A549 (cell line): ENCODE measurements at regions of chr16 and their contacts with region 1.

Region 1: DNA sequence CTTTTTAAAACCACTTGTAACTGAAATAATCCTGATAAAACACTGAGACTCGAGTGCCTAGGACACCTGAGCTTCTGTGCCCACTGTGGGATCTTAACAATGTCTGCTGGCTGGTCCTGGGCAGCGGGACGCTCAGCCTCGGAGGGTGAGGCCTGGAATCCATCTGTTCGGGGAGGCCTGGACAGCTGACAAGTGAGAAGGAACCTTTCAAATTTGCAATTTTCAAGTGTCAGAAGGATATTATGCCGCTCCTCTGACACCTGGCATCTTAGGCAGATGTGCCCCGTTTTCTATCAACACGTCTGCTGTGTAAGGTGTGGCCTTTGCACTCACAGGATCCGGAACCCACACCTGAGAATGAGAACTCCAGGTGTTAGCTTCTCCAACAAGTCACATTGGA is 33.1 kb upstream of the C16orf78 start:
- DNase-seq: no peak
- ATAC-seq: no peak
- H3K4me3 ChIP-seq: no peak overlapping the region
- H3K27ac ChIP-seq: no peak overlapping the region
- H3K4me1 ChIP-seq: no peaks in the 10 kb centered on the region
- CTCF ChIP-seq: no peak
- EP300 ChIP-seq: no peak
- POLR2A ChIP-seq: no peak
- RAD21 ChIP-seq: no peak

Region 2: DNA sequence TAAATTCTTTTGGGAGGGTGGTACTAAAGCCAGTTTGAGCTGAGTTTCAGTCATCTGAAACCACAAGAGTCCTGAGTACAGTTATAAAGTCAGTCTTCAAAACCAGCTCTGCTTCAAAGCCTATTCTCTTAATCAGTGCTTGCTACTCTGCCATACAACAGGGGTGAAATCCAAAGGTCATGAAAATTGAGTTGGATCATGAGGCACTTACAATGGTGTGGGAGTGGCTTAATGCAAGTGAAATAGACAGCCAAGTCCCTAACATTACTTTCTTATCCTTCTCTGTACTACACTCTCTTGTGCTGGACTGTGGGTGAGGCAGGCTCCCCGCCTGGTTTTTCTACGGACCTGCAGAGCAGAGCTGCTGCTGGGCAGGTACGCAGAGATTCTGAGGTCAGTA is 71.3 kb before region 1 on chr16:
- CTCF ChIA-PET with region 1: no interaction called
- POLR2A ChIA-PET with region 1: no interaction called
- DNase-seq: no peak
- ATAC-seq: no peak
- H3K4me3 ChIP-seq: no peak overlapping the region
- H3K27ac ChIP-seq: no peak overlapping the region
- H3K4me1 ChIP-seq: no peaks in the 10 kb centered on the region
- CTCF ChIP-seq: no peak
- EP300 ChIP-seq: no peak
- POLR2A ChIP-seq: no peak
- RAD21 ChIP-seq: no peak

Region 3: DNA sequence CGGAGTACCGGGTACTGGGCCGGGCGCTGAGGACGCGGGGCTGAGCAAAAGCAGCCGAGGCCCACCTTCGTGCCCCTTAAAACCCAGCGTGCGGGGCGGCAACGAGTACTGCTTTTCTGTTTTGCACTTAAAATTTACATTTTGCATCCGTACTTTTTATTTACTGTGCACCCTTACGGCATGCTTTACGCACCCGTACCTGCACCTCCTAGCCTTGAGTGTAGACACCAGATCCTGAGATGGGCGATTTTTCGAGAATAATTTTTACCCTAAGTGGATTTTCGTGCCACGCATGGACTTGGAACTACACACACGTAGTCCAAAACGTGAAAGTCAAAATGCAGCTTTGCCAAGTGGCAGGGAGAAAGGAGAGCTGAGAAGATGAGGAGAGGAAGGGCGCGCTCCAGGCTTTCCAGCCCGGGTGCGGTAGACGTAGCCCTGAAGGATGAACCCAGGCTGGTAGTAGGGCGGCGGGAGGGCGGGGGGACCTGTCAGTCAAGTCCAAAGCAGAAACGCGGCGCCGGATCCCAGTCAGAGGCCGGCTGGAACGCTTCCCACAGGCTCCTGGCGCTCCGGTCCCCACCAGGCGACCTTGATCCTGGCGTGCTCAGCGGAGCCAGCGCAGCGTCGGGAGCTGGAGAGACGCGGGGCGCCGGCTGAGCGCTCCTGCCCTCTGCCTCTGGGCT is 57.6 kb before region 1 on chr16:
- CTCF ChIA-PET with region 1: no interaction called
- POLR2A ChIA-PET with region 1: no interaction called
- DNase-seq: no peak
- ATAC-seq: no peak
- H3K4me3 ChIP-seq: peak overlapping the region; percentile 57
- H3K27ac ChIP-seq: peak overlapping the region in 1 of 2 experiments; percentile 69; a peak in 1 of 6 replicates
- H3K4me1 ChIP-seq: 0 out of 3 replicates have a peak, but pooled peaks cover 3% of the 10 kb centered on the region
- CTCF ChIP-seq: no peak
- EP300 ChIP-seq: no peak
- POLR2A ChIP-seq: no peak
- RAD21 ChIP-seq: no peak

Region 4: DNA sequence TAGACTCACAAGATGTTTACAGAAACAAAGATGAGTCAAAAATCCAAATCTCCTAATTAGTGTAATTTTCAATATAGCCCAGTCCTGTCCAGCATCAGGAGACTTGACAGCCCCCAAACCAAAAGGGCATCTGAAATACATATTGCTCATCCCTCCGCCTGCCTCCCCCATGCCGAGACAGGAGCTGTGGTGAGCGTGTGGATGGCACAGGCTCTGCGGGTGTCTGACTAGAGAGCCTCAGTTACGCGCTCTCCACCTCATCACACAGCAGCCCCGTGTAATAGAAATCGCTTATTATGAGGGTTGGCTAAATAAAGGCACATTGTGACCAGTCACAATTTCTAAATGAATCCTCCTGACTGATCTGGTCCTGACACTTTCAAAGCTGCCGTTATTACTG is 15.8 kb before region 1 on chr16:
- CTCF ChIA-PET with region 1: no interaction called
- POLR2A ChIA-PET with region 1: no interaction called
- DNase-seq: no peak
- ATAC-seq: no peak
- H3K4me3 ChIP-seq: no peak overlapping the region
- H3K27ac ChIP-seq: no peak overlapping the region
- H3K4me1 ChIP-seq: no peaks in the 10 kb centered on the region
- CTCF ChIP-seq: no peak
- EP300 ChIP-seq: no peak
- POLR2A ChIP-seq: no peak
- RAD21 ChIP-seq: no peak

Region 5: DNA sequence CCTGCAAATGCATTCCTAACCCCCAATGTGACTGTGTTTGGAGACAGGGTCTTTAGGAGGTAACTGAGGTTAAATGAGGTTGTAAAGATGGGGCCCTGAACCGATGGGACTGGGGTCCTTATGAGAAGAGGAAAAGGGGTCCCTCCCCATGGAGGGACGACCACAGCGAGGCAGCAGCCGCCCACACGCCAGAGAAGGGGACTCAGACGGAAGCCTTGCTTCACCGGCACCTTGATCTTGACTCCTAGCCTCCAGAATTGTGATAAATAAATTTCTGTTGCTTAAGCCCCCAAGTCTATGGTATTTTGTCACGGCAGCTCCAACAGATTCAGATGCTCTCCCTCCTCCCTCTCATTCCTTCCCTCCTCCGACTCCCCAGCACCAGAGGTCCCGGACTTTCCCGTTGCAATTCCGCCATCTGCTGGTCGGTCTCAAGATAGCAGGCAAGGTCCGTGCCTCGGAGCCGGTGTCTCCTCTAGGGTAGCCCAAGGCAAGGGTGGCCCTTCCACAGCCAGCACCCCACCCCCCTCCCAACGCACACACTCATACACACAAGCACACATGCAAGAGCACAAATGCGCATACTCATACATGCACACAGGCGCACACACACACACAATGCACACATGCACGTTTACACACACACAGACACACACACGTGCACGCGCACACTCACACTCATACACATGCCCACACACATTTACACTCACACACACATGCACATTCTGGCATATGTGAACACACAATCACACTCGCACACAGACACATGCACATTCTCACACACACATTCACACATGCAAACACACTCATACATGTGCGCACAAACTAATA is 10.0 kb after region 1 on chr16:
- CTCF ChIA-PET with region 1: interaction called, 15 read pairs
- POLR2A ChIA-PET with region 1: no interaction called
- DNase-seq: peak; percentile 41 to 54
- ATAC-seq: peak; percentile 75 to 86
- H3K4me3 ChIP-seq: no peak overlapping the region
- H3K27ac ChIP-seq: no peak overlapping the region
- H3K4me1 ChIP-seq: no peaks in the 10 kb centered on the region
- CTCF ChIP-seq: peak; percentile 67
- EP300 ChIP-seq: no peak
- POLR2A ChIP-seq: no peak
- RAD21 ChIP-seq: peak; percentile 78 to 88